Activated CD4-positive, alpha-beta T cell treated with anti-CD3 and anti-CD28 coated beads for 36 hours (primary cell): ENCODE measurements at regions of chr18 and their contacts with region 1.

Region 1: DNA sequence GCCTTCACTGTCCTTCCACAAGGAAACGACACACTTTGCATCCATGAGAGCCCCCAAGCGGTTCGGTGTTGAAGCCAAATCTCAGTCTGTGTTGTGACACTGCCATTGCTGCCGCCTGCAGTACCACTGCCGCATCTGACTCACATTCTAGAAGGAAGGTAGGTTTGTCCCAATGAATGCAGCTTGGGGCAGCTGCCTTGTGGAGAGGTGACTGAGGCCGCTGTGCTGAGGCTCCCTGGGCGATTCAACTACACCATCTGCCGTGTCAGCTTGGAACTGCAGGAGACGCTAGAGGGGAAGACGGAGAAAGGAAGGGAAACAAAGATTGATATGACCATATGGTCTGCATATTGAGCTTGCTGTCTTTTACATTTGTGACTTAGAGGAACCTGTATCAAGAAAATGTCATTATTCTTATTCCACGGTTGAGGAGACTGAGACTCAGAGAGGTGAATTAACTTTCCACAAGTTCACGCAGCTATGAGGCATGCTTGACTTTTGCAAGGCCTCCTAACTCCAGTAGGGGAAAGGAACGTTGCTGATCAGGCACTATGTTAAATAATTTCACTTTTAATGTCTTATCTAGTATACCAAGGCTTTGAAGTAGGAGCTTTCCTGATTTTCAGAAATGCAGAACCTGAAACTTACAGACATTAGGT is 43.5 kb upstream of the LMAN1 start:
- DNase-seq: peak; percentile 88
- ATAC-seq: peak; percentile 100
- H3K4me3 Mint-ChIP-seq: no peak overlapping the region
- H3K27ac Mint-ChIP-seq: no peak overlapping the region
- H3K4me1 Mint-ChIP-seq: no peaks in the 10 kb centered on the region
- H3K27me3 Mint-ChIP-seq: no peaks in the 10 kb centered on the region

Region 2: DNA sequence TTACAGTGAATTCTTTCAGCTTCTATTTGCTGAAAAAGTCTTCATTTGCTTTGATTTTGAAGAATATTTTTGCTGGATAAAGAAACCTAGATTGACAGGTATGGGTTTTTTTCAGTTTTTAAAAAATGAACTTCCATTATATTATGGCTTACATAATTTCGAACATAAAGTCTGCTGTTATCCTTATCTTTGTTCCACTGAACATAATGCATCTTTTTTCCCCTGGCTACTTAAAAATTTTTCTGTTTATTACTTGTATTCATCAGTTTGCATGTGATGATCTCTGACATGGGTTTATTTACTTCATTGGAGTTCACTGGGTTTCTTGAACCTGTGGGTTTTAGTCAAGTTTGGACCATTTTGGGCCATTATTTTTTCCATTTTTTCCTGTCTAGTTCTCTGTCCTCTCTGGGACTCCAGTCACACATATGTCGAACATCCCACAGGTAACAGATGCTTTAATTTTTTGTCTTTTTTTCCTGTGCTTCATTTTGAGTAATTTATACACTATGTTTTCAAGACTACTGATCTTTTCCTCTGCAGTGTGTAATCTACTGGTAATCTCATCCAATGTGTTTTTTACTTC is 229.8 kb before region 1 on chr18:
- CTCF ChIA-PET with region 1: no interaction called
- POLR2A ChIA-PET with region 1: no interaction called
- intact Hi-C with region 1: no loop called
- DNase-seq: no peak
- ATAC-seq: no peak
- H3K4me3 Mint-ChIP-seq: no peak overlapping the region
- H3K27ac Mint-ChIP-seq: no peak overlapping the region
- H3K4me1 Mint-ChIP-seq: no peaks in the 10 kb centered on the region
- H3K27me3 Mint-ChIP-seq: peaks cover 15% of the 10 kb centered on the region

Region 3: DNA sequence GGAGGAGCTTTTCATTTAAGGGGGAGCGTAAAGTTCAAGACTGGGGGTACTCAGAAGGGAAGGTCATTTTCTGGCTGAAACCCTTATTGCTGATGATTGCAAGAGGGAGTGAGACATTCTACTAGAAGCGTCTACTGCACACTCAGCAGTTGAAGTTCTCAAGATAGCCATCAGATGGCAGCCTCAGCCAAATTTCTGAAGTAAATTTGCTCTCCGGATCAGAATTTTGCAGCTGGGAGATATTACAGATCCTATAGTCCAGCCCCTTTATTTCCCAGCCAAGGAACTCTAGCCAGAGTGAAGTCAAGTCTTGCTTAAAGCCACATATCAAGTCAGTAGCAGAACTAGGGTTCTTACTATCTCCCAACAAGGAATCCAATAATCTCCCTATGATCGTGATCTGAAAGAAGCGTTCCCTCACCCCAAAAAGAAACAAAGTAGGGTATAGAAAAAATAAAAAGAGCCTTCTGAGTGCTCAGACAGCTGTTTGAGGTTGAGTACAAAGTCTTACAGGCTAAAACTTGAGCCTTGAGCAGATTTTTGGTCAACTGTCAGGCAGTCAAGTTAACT is 153.3 kb before region 1 on chr18:
- CTCF ChIA-PET with region 1: interaction called, 63 read pairs
- POLR2A ChIA-PET with region 1: no interaction called
- intact Hi-C with region 1: loop called (anchors 2 kb)
- DNase-seq: peak; percentile 63
- ATAC-seq: no peak
- H3K4me3 Mint-ChIP-seq: no peak overlapping the region
- H3K27ac Mint-ChIP-seq: no peak overlapping the region
- H3K4me1 Mint-ChIP-seq: no peaks in the 10 kb centered on the region
- H3K27me3 Mint-ChIP-seq: peaks cover 43% of the 10 kb centered on the region

Region 4: DNA sequence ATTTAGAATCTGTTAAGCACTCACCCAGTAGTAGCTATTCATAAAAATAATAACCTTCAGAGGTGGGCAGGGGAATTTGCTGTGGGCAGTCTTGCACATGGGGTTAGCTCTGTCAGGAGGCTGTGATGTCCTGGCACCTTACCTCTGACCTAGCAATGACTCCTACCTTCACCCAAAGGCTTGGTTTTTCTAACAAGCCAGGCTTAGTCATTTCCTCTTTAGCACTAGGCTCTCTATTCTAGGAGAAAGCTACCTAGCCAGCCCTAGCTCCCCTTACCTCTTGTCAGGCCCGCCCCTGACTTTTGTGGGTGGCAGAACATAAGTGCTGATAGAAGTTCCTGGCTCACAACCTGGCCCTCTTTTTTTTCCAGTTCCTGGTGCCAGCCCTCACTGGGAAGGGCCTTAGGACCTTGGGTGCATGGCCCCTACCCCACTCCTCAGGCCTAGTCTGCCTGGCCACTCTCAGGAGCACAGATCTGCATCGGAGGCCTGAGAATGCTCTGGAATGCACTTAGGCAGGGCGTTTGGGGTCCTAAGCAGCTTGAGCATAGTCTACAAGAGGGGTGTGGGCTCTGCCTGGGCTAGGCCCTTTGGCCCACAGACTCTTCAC is 101.8 kb before region 1 on chr18:
- CTCF ChIA-PET with region 1: interaction called, 33 read pairs
- POLR2A ChIA-PET with region 1: no interaction called
- intact Hi-C with region 1: no loop called
- DNase-seq: peak; percentile 6
- ATAC-seq: peak; percentile 91
- H3K4me3 Mint-ChIP-seq: no peak overlapping the region
- H3K27ac Mint-ChIP-seq: no peak overlapping the region
- H3K4me1 Mint-ChIP-seq: no peaks in the 10 kb centered on the region
- H3K27me3 Mint-ChIP-seq: peaks cover 16% of the 10 kb centered on the region

Region 5: DNA sequence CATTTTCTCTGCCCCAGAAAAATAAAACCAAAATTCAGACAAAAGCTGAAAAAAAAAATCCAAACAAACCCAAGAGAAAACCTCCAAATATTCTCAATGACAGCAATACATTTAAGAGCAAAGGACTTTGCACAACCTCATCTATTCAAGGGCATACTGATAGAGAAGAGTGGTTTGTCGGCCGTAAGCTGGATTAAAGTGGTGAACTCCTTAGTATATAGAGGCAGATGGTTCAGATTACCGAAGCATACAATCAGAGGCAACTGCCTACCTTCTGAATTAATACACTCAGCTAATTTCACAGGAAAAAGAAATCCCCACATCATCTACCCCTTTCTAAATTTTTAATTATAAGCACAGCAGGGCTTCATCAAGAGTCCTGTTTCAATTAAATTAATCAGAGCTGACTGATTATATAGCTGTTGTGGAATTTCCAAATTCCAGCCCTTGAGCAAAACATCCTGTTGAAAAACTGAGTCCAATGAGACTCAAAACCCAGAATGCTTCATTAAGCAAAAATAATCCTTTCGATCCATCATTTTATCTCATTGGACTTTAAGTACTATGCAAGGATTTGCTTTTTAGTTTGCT is 84.0 kb before region 1 on chr18 and contains the start of gene CPLX4:
- CTCF ChIA-PET with region 1: interaction called, 25 read pairs
- POLR2A ChIA-PET with region 1: no interaction called
- intact Hi-C with region 1: no loop called
- DNase-seq: no peak
- ATAC-seq: no peak
- H3K4me3 Mint-ChIP-seq: no peak within 1 kb of the TSS
- H3K27ac Mint-ChIP-seq: no peak within 1 kb of the TSS
- H3K4me1 Mint-ChIP-seq: no peaks in the 10 kb centered on the region
- H3K27me3 Mint-ChIP-seq: peaks cover 7% of the 10 kb centered on the region
- total RNA-seq, gene CPLX4: not detected

Region 6: GRCh38 chr18:59358712-59359575 is 43.6 kb before region 1 on chr18 and contains the start of gene LMAN1:
- CTCF ChIA-PET with region 1: interaction called, 15 read pairs
- POLR2A ChIA-PET with region 1: no interaction called
- intact Hi-C with region 1: loop called (anchors 2 to 5 kb)
- DNase-seq: peak; percentile 97
- ATAC-seq: peak; percentile 93
- H3K4me3 Mint-ChIP-seq: peak within 1 kb of the TSS; percentile 98
- H3K27ac Mint-ChIP-seq: peak within 1 kb of the TSS; percentile 99
- H3K4me1 Mint-ChIP-seq: peaks cover 29% of the 10 kb centered on the region
- H3K27me3 Mint-ChIP-seq: no peaks in the 10 kb centered on the region
- total RNA-seq, gene LMAN1: 121 to 134 TPM